GM10248 (cell line): ENCODE measurements at regions of chr17 and their contacts with region 1.

Region 1: DNA sequence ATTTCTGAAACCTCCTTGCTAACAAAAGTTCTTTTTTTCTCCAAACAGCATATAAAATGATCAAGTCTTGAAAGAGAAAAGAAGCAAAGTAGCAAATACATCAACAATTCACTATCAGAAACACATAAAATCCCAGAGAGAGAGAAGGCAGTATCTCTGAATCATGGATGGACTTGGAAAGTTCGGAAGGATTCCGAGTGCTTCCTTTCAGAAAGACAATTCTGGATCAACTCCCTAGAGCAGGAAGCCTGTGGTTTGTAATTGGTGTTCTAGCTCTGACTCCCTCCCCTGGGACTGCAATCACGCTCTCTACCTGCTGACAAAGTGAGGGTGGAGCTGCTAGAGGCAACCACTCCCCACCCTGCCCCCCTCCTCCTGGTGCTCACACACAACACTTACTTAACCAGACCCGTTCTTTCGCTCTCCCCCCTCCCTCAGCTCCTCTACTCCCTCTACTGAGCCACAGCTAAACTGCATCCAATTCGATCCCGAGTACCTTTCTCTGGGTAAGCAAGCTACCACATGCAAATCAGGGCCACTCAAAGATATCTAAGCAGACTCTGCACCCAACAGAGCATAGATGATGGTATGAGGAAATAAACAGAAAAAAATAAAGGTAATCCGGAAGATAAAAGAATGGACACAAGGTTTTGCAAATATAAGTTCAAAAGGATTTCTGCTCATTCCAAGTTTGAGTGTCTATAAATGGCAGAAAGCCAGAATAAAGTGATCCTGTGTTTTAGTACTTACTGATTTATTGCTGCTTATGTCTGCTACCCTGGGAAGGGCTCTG is at the start of gene RNF43:
- DNase-seq: peak; percentile 92
- CTCF ChIP-seq: peak; percentile 79

Region 2: DNA sequence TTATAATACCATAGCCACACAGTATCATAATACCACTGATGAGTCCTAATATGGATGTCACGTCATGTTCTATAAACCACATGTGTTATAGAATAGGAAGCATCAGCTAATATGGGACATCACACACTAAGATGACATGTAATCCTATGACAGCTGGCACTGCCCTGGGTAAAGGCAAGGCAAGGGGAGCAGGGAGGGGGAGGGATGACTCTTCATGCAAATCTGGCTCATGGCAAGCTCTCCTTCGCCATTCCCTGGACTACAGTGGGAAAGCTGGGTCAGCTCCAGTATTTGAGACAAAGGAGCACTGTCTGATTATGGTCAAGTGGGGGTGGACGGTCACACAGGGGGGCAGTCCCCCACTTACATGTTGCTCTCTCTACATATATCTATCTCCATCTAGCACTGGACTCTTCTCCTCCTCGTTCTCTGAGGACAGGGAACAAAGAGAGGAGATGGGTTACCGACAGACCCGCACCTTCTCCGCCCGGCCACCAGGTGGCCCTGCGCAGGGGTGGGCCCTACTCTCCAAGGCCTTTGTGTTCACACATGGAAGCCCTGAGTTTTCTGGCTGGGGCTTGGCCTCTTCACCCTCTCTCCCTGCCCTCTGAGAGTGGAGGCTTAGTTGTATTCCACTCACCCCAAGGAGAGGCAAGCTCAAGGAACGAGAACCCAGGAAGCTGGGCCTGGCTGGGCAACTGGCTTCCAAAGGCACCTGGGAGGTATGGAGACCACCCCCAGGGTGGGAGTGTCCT is 113.3 kb before region 1 on chr17:
- CTCF ChIA-PET with region 1: interaction called, 12 read pairs
- POLR2A ChIA-PET with region 1: no interaction called
- DNase-seq: peak; percentile 91
- CTCF ChIP-seq: peak; percentile 79

Region 3: GRCh38 chr17:58329035-58329809 is 88.3 kb before region 1 on chr17:
- CTCF ChIA-PET with region 1: interaction called, 4 read pairs
- POLR2A ChIA-PET with region 1: interaction called, 10 read pairs
- DNase-seq: peak; percentile 76
- CTCF ChIP-seq: peak; percentile 65

Region 4: GRCh38 chr17:58344047-58344790 is 73.3 kb before region 1 on chr17:
- CTCF ChIA-PET with region 1: interaction called, 19 read pairs
- POLR2A ChIA-PET with region 1: no interaction called
- DNase-seq: peak; percentile 76
- CTCF ChIP-seq: no peak

Region 5: GRCh38 chr17:58382108-58382871 is 35.2 kb before region 1 on chr17:
- CTCF ChIA-PET with region 1: interaction called, 14 read pairs
- POLR2A ChIA-PET with region 1: no interaction called
- DNase-seq: no peak
- CTCF ChIP-seq: no peak

Region 6: GRCh38 chr17:58396173-58396572 is 21.3 kb before region 1 on chr17:
- CTCF ChIA-PET with region 1: interaction called, 14 read pairs
- POLR2A ChIA-PET with region 1: no interaction called
- DNase-seq: no peak
- CTCF ChIP-seq: no peak

Region 7: GRCh38 chr17:58741121-58741625 is 323.7 kb after region 1 on chr17:
- CTCF ChIA-PET with region 1: no interaction called
- POLR2A ChIA-PET with region 1: no interaction called
- DNase-seq: no peak
- CTCF ChIP-seq: no peak